Activated CD4-positive, alpha-beta T cell treated with anti-CD3 and anti-CD28 coated beads for 36 hours (primary cell): ENCODE measurements at regions of chr1 and their contacts with region 1.

Region 1: DNA sequence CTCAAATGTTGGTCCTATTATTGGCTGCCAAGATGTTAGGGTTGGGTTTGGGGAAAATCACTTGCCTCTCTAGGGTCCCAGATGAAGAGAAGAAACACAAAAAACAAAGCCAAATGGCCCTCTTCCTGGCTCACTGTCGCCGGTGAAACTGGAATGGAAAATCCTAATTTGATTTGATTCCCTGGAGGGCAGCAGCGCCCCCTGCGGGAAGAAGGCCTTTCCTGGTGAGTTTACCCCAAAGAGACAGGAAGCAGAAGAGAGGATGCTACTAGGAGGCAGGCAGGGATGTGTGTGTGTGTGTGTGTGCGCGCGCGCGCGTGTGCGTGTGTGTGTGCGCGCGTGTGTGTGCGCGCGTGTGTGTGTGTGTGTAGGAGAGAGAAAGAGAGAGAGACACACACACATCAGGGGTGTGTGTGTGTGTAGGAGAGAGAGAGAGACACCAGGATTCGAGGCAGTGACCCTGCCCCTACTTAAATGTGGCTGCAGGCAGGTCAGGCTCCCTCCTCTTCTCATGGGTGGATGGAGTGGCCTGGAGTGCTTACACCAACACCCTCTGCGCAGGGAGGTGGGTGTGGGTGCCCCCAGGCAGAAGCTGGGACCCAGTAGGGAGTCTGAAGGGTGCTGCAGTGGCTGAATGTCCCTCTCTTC is 3.1 kb upstream of the SELENON start:
- DNase-seq: peak; percentile 93
- ATAC-seq: peak; percentile 61
- H3K4me3 Mint-ChIP-seq: peak overlapping the region; percentile 56
- H3K27ac Mint-ChIP-seq: peak overlapping the region; percentile 95
- H3K4me1 Mint-ChIP-seq: peaks cover 62% of the 10 kb centered on the region
- H3K27me3 Mint-ChIP-seq: no peaks in the 10 kb centered on the region

Region 2: DNA sequence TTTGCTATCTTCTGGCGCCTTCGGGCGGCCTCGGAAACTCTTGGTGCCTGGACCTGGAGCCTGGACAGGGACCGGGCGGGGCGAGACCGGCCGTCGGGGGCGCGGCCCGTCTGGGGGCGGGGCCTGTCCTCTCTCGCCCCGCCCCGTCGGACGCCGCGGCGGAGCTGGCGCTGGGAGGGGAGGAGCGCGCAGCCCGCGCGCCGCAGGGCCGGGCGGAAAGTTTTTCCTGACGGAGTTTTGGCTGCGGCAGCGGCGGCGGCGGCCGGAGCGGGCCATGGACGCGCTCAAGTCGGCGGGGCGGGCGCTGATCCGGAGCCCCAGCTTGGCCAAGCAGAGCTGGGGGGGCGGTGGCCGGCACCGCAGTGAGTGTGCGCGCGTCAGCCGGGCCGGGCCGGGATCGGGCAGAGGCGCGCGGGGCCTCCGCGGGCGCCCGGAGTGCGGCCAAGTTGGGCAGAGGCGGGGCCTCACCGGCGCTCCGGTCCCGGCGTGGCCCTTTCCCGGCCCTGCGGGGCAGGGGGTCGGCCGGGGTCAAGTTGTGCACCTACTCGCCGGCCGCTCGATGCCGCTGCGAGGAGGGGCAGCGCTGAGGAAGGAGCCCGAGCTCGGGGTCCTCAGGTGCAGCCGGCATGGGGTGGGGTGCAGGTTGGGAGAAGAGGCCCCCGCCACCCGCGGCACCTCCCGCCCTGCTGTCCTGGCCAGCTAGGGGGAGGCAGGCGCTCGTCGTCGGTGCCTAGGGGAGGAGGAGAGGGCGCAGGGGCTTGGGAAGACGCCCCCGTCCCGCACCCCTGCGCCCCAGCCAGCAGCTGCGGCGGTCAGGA is 253.3 kb before region 1 on chr1 and contains the start of gene LDLRAP1:
- CTCF ChIA-PET with region 1: interaction called, 6 read pairs
- POLR2A ChIA-PET with region 1: no interaction called
- intact Hi-C with region 1: loop called (anchors 5 kb)
- DNase-seq: peak; percentile 78
- ATAC-seq: peak; percentile 89
- H3K4me3 Mint-ChIP-seq: peak within 1 kb of the TSS; percentile 80
- H3K27ac Mint-ChIP-seq: peak within 1 kb of the TSS; percentile 75
- H3K4me1 Mint-ChIP-seq: peaks cover 34% of the 10 kb centered on the region
- H3K27me3 Mint-ChIP-seq: no peaks in the 10 kb centered on the region
- total RNA-seq, gene LDLRAP1: 13.0 to 14.6 TPM

Region 3: GRCh38 chr1:25608488-25609178 is 188.3 kb before region 1 on chr1:
- CTCF ChIA-PET with region 1: interaction called, 27 read pairs
- POLR2A ChIA-PET with region 1: no interaction called
- intact Hi-C with region 1: loop called (anchors 1 to 2 kb)
- DNase-seq: peak; percentile 95
- ATAC-seq: peak; percentile 99
- H3K4me3 Mint-ChIP-seq: no peak overlapping the region
- H3K27ac Mint-ChIP-seq: no peak overlapping the region
- H3K4me1 Mint-ChIP-seq: peaks cover 11% of the 10 kb centered on the region
- H3K27me3 Mint-ChIP-seq: peaks cover 6% of the 10 kb centered on the region

Region 4: DNA sequence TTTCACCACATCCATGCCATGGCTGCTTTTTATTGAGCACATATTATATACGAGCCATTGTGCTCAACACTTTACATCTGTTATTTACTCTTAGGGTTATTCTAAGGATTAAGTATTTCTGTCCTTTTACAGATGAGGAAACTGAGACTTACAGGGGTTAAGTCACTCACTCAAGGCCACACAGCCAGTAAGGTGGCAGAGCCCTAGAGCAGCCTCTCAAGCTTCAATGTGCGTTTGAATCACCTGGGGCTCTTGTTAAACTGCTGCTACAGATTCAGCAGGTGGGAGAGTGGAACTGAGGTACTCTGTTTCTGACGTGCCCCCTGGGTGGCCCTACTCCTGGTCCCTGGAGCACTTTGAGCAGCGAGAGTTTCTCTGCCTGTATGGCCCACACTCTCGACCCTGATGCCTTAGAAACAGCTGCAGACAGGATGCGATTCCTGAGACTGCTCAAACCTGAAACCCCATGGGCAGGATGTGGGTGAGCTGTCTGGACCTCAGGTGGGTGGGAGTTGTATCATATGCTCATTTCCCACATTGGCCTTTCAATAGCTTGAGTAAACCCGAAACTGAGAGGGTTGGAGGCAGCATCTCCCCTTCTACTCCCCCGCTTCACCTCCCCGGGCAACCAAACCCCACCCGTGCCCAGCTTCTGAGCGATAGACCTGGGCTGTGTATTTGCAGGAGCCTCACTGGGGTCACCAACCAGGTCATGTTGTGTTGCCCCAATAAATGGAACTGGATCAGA is 121.0 kb before region 1 on chr1:
- CTCF ChIA-PET with region 1: interaction called, 4 read pairs
- POLR2A ChIA-PET with region 1: no interaction called
- intact Hi-C with region 1: loop called (anchors 1 to 5 kb)
- DNase-seq: peak; percentile 94
- ATAC-seq: peak; percentile 85
- H3K4me3 Mint-ChIP-seq: peak overlapping the region; percentile 50
- H3K27ac Mint-ChIP-seq: peak overlapping the region; percentile 78
- H3K4me1 Mint-ChIP-seq: peaks cover 89% of the 10 kb centered on the region
- H3K27me3 Mint-ChIP-seq: peaks cover 2% of the 10 kb centered on the region

Region 5: GRCh38 chr1:25766721-25767436 is 30.1 kb before region 1 on chr1:
- CTCF ChIA-PET with region 1: interaction called, 4 read pairs
- POLR2A ChIA-PET with region 1: no interaction called
- intact Hi-C with region 1: loop called in 1 of 2 experiments (anchors 5 kb)
- DNase-seq: no peak
- ATAC-seq: no peak
- H3K4me3 Mint-ChIP-seq: no peak overlapping the region
- H3K27ac Mint-ChIP-seq: no peak overlapping the region
- H3K4me1 Mint-ChIP-seq: peaks cover 53% of the 10 kb centered on the region
- H3K27me3 Mint-ChIP-seq: no peaks in the 10 kb centered on the region